MCF 10A (cell line): ENCODE measurements at regions of chr7 and their contacts with region 1.

Region 1: GRCh38 chr7:100673300-100673941 is at the start of gene GNB2:
- DNase-seq: peak; percentile 99
- H3K4me3 Mint-ChIP-seq: peak within 1 kb of the TSS; percentile 76
- H3K27ac Mint-ChIP-seq: peak within 1 kb of the TSS; percentile 94
- H3K4me1 Mint-ChIP-seq: peaks cover 11% of the 10 kb centered on the region
- H3K27me3 Mint-ChIP-seq: no peaks in the 10 kb centered on the region
- CTCF ChIP-seq: no peak
- total RNA-seq, gene GNB2: 196 and 201 TPM in 2 replicates

Region 2: GRCh38 chr7:100573691-100574361 is 99.6 kb before region 1 on chr7 and contains the start of gene SAP25:
- CTCF ChIA-PET with region 1: no interaction called
- POLR2A ChIA-PET with region 1: no interaction called
- intact Hi-C with region 1: no loop called
- DNase-seq: no peak
- H3K4me3 Mint-ChIP-seq: no peak within 1 kb of the TSS
- H3K27ac Mint-ChIP-seq: no peak within 1 kb of the TSS
- H3K4me1 Mint-ChIP-seq: no peaks in the 10 kb centered on the region
- H3K27me3 Mint-ChIP-seq: no peaks in the 10 kb centered on the region
- CTCF ChIP-seq: no peak
- total RNA-seq, gene SAP25: 1.2 and 2.9 TPM in 2 replicates

Region 3: GRCh38 chr7:100611974-100612729 is 61.3 kb before region 1 on chr7 and contains the start of gene MOSPD3:
- CTCF ChIA-PET with region 1: interaction called, 4 read pairs
- POLR2A ChIA-PET with region 1: interaction called, 12 read pairs
- intact Hi-C with region 1: loop called (anchors 2 kb)
- DNase-seq: peak; percentile 99
- H3K4me3 Mint-ChIP-seq: peak within 1 kb of the TSS; percentile 92
- H3K27ac Mint-ChIP-seq: peak within 1 kb of the TSS; percentile 99
- H3K4me1 Mint-ChIP-seq: peaks cover 6% of the 10 kb centered on the region
- H3K27me3 Mint-ChIP-seq: no peaks in the 10 kb centered on the region
- CTCF ChIP-seq: no peak
- total RNA-seq, gene MOSPD3: 5.2 and 7.4 TPM in 2 replicates

Region 4: DNA sequence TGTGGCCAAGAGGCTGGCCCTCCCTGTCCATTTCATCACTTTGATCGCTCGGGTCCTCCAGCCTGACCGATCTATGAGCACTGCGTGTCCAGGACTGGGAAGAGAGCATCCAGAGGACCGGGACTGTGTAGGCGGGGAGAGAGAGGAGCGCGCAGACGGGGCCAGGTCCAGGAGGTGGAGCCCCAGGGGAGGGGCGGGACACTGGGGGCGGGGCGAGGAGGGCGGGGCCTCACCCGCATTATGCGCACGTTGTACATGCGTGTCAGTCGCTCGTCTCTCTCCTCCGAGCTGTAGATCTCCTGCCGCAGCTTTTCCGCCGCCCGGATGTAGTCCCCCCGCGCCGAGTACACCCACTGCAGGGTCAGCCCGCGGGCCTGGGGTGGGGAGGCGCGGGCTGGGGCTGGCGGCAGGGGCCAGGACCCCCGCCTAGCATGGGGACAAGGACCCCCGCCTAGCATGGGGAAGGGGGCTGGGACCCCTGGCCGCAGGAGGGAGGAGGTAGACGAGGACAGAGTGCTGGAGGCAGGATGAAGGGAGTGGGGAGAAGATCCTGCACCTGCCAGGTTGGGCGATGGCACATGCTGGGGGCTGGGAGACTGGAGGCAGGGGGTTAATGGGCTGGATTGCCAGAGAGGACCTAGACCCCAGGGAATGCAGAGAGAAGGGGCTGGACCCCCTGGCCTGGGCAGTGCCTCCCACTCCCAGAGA is 46.7 kb before region 1 on chr7:
- CTCF ChIA-PET with region 1: no interaction called
- POLR2A ChIA-PET with region 1: interaction called, 7 read pairs
- intact Hi-C with region 1: loop called (anchors 5 kb)
- DNase-seq: peak; percentile 84
- H3K4me3 Mint-ChIP-seq: peak overlapping the region; percentile 53
- H3K27ac Mint-ChIP-seq: no peak overlapping the region
- H3K4me1 Mint-ChIP-seq: peaks cover 6% of the 10 kb centered on the region
- H3K27me3 Mint-ChIP-seq: no peaks in the 10 kb centered on the region
- CTCF ChIP-seq: no peak